Aorta (tissue), 5 donors: ENCODE measurements at regions of chr5 and their contacts with region 1.

Region 1: DNA sequence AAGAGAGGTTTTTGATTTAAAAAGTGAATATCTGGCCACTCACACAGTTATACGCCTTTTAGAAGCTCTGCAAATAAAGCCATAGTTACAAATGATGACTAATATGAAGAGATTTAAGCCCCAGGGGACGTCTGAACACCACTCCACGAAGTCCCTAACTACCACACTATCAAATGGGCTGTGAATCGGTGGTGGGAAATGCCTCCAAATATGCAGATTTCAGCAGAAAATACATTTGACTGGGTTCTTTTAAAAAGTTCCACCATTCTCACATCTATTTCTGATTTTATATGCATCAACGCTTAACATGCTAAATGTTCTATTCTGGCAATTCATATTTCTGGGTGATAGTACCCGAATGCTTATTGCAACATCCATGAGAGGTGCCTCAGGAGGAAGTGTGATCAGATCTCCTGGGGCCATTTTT is 22.5 kb downstream of the TICAM2 start:
- DNase-seq: no peak
- ATAC-seq: no peak
- H3K4me3 ChIP-seq: no peak overlapping the region
- H3K27ac ChIP-seq: no peak overlapping the region
- H3K4me1 ChIP-seq: no peaks in the 10 kb centered on the region
- H3K27me3 ChIP-seq: no peaks in the 10 kb centered on the region

Region 2: DNA sequence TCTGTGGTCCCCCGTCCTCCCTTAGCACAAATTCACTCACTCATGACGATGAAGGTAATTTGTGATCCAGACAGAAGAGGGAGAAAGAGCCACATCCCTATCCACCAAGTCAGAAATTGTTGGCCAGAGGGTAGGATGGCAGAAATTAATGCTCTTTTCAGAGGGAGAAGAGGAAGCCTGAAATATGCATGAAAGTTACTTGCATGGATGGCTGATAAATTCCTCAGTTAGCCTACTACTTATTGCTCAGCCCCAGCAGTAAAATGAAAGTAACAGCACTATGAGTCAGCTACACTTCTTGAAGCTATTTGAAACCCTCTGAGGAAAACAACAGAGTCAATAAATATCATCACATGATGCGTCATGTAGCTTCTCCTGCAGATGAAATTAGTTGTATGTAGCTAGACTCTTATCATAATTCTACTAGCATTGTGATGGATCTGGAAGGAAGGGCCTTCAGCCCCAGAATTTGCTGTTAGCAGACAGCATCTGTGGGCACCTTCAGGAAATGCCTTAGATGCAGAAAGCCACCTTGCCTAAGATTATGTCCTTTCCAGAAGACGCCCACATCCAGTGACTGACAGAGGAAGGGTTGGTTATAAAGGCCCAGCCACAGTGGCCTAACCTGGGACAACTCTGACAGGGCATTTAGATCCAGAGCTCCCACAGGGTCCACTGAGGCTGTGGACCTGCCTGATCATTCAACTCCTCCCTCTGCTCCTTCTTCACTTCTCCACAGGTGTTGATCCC is 202.1 kb before region 1 on chr5:
- intact Hi-C with region 1: loop called in 1 of 2 experiments (anchors 10 kb)
- DNase-seq: no peak
- ATAC-seq: no peak
- H3K4me3 ChIP-seq: no peak overlapping the region
- H3K27ac ChIP-seq: no peak overlapping the region
- H3K4me1 ChIP-seq: no peaks in the 10 kb centered on the region
- H3K27me3 ChIP-seq: no peaks in the 10 kb centered on the region

Region 3: DNA sequence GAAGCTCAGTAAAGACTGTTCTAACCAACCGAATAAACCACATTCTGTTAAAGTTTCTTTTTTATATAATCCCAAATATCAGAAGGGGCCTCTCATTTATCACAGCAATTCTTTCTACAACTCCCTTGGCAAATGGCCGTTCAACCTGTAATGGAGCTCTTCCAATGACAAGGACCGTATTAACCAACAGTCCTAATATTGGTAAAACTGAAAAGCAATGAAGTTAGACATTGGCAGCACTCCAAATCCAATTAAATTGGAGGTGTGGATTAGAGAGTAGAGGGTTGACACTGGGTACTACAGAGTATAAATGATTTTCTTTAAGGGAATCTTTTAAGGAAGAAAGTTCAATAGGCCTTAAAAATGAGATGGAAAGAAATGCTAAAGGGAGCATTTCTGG is 45.2 kb after region 1 on chr5:
- intact Hi-C with region 1: no loop called
- DNase-seq: no peak
- ATAC-seq: no peak
- H3K4me3 ChIP-seq: peak overlapping the region; percentile 61 to 88
- H3K27ac ChIP-seq: peak overlapping the region in 1 of 2 donors; percentile 43
- H3K4me1 ChIP-seq: peaks cover 1 to 18% of the 10 kb centered on the region in 2 donors
- H3K27me3 ChIP-seq: no peaks in the 10 kb centered on the region